GM12878 (cell line): ENCODE measurements at regions of chrX and their contacts with region 1.

Region 1: DNA sequence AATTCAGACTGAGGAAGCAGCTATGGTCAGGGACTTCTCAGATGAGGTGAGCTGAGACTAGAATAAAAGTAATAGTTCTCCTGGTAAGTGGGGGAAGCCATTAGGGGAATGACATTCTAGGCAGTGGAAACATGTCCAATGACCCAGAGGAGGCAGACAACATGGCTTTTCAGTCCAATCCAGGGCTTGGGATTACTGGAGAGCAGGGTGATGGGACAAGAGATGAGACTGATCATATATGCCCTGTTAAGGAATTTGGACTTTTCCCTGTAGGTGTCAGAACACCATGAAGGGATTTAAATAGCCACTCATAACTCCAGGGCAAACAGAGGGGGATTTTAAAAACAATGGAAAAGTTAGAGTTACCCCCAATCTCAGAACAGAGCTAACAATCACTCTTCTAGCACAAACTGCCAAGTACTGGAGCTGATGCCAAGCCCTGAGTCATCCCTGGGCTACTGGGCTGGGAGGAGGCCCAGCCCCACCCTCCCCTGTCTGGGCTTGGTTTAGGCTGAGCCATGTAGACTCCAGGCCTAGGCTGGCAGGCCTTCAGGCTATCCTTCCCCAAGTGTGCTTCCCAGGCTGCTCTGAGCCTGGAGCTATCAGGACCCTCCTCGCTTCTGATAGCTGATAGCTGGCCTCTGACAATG is 22.7 kb upstream of the MSN start:
- DNase-seq: no peak
- ATAC-seq: peak; percentile 50; the same call in 2 of the 3 replicates
- H3K4me3 ChIP-seq: no peak overlapping the region
- H3K27ac ChIP-seq: no peak overlapping the region
- H3K4me1 ChIP-seq: no peaks in the 10 kb centered on the region
- H3K27me3 ChIP-seq: no peaks in the 10 kb centered on the region
- CTCF ChIP-seq: no peak
- EP300 ChIP-seq: no peak
- POLR2A ChIP-seq: no peak
- RAD21 ChIP-seq: no peak

Region 2: GRCh38 chrX:65601530-65602220 is 43.1 kb before region 1 on chrX:
- CTCF ChIA-PET with region 1: no interaction called
- POLR2A ChIA-PET with region 1: no interaction called
- RAD21 ChIA-PET with region 1: interaction called, 3 read pairs
- SMC1A ChIA-PET with region 1: no interaction called
- in situ Hi-C with region 1: loop called (anchors 5 kb)
- intact Hi-C with region 1: no loop called
- DNase-seq: no peak
- ATAC-seq: peak; percentile 30; the same call in 2 of the 3 replicates
- H3K4me3 ChIP-seq: no peak overlapping the region
- H3K27ac ChIP-seq: no peak overlapping the region
- H3K4me1 ChIP-seq: peaks cover 2% of the 10 kb centered on the region; the same call in 1 of the 2 replicates
- H3K27me3 ChIP-seq: no peaks in the 10 kb centered on the region
- CTCF ChIP-seq: no peak
- EP300 ChIP-seq: no peak
- POLR2A ChIP-seq: no peak
- RAD21 ChIP-seq: no peak